RWPE1 (cell line): ENCODE measurements at regions of chr18 and their contacts with region 1.

Region 1: GRCh38 chr18:59823596-59824195 is 76.1 kb upstream of the PMAIP1 start:
- DNase-seq: peak; percentile 25
- H3K27ac ChIP-seq: no peak overlapping the region
- CTCF ChIP-seq: peak; percentile 70

Region 2: GRCh38 chr18:59238385-59238784 is 585.3 kb before region 1 on chr18:
- CTCF ChIA-PET with region 1: no interaction called
- POLR2A ChIA-PET with region 1: no interaction called
- DNase-seq: no peak
- H3K27ac ChIP-seq: no peak overlapping the region
- CTCF ChIP-seq: no peak

Region 3: GRCh38 chr18:59459369-59460079 is 364.2 kb before region 1 on chr18:
- CTCF ChIA-PET with region 1: interaction called, 25 read pairs
- POLR2A ChIA-PET with region 1: no interaction called
- DNase-seq: peak; percentile 20
- H3K27ac ChIP-seq: no peak overlapping the region
- CTCF ChIP-seq: peak; percentile 67

Region 4: DNA sequence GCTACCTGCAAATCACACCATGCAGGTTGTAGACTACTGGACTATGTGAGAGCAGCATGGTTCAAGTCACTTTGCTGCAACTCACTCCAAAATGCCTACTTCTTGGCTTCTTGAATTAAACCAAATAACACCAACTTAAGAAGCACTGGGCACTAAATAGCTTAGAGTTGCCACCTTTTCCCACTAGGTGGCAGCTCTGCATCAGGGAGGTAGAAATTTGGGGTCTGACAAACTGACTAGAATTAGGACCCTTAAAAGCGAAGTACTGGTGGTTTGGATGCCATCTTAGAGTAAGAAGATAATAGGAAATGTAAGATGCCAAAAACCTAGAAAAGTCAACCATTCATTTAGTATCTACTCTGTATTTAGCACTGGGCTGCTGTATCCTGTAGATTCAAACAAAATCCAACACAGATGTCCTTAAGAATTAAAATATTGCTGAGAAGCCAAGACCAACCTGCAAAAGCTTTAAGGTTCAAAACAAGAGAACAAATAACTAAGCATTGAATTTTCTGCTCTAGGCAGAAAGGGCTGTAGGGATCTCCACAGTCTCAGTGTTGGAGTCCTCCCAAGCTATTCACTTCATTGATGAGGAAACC is 192.0 kb before region 1 on chr18:
- CTCF ChIA-PET with region 1: interaction called, 29 read pairs
- POLR2A ChIA-PET with region 1: no interaction called
- DNase-seq: peak; percentile 7
- H3K27ac ChIP-seq: no peak overlapping the region
- CTCF ChIP-seq: peak; percentile 50

Region 5: GRCh38 chr18:59697236-59697932 is 126.3 kb before region 1 on chr18 and contains the start of gene CCBE1:
- CTCF ChIA-PET with region 1: interaction called, 10 read pairs
- POLR2A ChIA-PET with region 1: no interaction called
- DNase-seq: no peak
- H3K27ac ChIP-seq: peak within 1 kb of the TSS; percentile 30; the same call in 1 of the 2 replicates
- CTCF ChIP-seq: peak; percentile 92